Prostate gland (tissue), 2 donors: ENCODE measurements at regions of chr9 and their contacts with region 1.

Region 1: GRCh38 chr9:36023260-36024048 is 13.3 kb upstream of the RECK start:
- DNase-seq: peak; percentile 73
- H3K4me3 ChIP-seq: no peak overlapping the region
- H3K27ac ChIP-seq: no peak overlapping the region
- H3K4me1 ChIP-seq: no peaks in the 10 kb centered on the region
- H3K27me3 ChIP-seq: no peaks in the 10 kb centered on the region
- CTCF ChIP-seq: peak; percentile 63 to 81 (median 76)
- POLR2A ChIP-seq: no peak

Region 2: DNA sequence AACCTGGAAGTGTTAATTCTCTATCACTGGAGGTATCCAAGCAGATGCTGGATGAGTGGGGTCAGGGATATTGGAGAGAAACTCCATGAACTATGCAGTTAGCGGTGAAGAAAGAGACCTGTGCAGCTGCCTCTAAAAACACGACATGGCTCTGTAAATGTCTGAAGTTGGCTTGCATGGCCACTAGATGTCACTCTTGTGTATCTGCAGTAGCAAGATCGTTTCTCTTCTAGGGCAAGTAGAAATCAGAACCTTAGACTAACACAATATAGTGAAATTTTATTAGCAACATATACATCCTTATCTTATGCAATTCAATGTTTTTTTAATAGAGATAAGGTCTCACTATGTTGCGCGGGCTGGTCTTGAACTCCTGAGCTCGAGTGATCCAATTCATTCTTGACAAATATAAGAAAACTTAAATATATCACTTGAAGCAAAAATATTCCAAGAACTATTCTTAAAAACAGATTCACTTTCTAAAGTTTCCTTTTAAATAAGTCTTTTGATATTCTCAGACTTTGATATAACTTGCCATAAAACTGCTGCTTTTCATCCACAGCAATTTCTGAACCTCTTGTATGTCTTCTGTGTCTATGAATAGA is 68.4 kb before region 1 on chr9:
- intact Hi-C with region 1: loop called (anchors 5 kb)
- DNase-seq: peak; percentile 60
- H3K4me3 ChIP-seq: no peak overlapping the region
- H3K27ac ChIP-seq: no peak overlapping the region
- H3K4me1 ChIP-seq: no peaks in the 10 kb centered on the region
- H3K27me3 ChIP-seq: no peaks in the 10 kb centered on the region
- CTCF ChIP-seq: peak in 3 of 4 experiments; percentile 76 to 84 (median 80)
- POLR2A ChIP-seq: no peak